ENCODE measurements at regions of chr4 and their contacts with region 1.

Region 1: GRCh38 chr4:108834835-108835384 is 72.1 kb upstream of the ETNPPL start:
- DNase-seq: no peak
- H3K4me3 ChIP-seq: no peak overlapping the region
- H3K27ac ChIP-seq: no peak overlapping the region
- H3K27me3 ChIP-seq: peaks cover 0 to 4% (median 0%) of the 10 kb centered on the region in 45 donors
- CTCF ChIP-seq: peak; percentile 43 to 87 (median 74)

Region 2: DNA sequence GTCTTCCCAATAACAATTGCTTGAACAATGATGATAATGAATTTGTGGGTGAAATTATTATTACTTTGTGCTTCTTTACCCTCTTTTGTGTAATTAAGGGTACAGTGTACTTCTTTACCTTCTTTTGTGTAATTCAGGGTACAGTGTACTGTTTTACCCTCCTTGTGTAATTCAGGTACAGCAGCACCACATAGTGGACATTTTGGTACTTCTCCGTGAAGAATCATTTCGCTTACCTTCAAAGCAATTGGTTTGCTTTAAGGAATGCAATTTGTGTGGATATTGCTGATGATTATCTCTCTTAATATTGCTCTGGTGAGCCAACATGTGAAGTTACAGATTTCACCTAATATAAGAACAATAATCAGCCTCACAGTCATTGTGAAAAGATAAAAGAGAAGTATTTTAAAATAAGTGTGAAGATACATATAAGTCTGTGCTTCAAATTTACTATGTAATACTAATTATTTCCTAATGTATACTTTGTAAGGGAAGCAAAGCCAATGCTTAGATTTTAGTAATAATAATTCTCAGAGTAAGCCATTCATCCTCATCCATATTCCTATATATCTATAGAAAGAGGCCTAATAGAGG is 571.5 kb after region 1 on chr4:
- intact Hi-C with region 1: loop called (anchors 5 kb)
- DNase-seq: peak in 1 of 10 donors; percentile 25
- H3K4me3 ChIP-seq: no peak overlapping the region
- H3K27ac ChIP-seq: no peak overlapping the region
- H3K27me3 ChIP-seq: no peaks in the 10 kb centered on the region
- CTCF ChIP-seq: peak in 55 of 56 donors; percentile 41 to 83 (median 66)

Measured in dorsolateral prefrontal cortex (tissue), 120 donors.